Activated CD4-positive, alpha-beta T cell treated with anti-CD3 and anti-CD28 coated beads, Interleukin-2, amount 10 ng/mL, durations not matched to agents 7 days and 5 days (primary cell): ENCODE measurements at regions of chr13 and their contacts with region 1.

Region 1: DNA sequence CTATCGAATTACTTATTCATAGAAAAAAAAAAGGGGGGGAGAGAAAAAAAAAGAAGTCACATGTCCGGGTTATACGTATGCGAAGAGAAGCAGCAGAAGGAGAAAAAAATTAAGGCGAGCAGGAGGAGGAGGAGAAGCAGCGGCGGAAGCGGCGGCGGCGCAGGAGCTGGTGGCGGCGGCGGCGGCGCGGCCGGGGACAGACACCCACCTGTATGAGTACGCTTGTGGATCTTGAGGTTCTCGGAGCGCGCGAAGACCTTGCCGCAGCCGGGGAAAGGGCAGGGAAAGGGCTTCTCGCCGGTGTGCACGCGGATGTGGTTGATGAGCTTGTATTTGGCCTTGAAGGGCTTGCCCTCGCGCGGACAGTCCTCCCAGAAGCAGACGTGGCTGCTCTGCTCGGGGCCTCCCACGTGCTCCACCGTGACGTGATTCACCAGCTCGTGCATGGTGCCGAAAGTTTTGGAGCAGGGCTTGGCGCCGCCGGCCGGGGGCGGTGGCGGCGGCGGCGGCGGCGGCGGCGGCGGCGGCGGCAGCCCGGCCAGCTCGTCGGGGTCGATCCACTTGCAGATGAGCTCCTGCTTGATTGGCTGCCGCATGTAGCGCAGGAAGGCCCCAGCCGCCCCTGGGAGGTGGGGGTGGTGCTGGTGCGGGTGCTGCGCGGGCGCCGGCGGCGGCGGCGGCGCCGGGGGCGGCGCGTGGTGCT is 1.5 kb downstream of the ZIC5 start:
- DNase-seq: peak; percentile 30
- H3K4me3 Mint-ChIP-seq: peak overlapping the region; percentile 61
- H3K27ac Mint-ChIP-seq: peak overlapping the region; percentile 86
- H3K4me1 Mint-ChIP-seq: peaks cover 14% of the 10 kb centered on the region
- H3K27me3 Mint-ChIP-seq: peaks cover 74% of the 10 kb centered on the region

Region 2: GRCh38 chr13:99590519-99591011 is 379.5 kb before region 1 on chr13:
- CTCF ChIA-PET with region 1: no interaction called
- POLR2A ChIA-PET with region 1: no interaction called
- DNase-seq: no peak
- H3K4me3 Mint-ChIP-seq: no peak overlapping the region
- H3K27ac Mint-ChIP-seq: no peak overlapping the region
- H3K4me1 Mint-ChIP-seq: peaks cover 3% of the 10 kb centered on the region
- H3K27me3 Mint-ChIP-seq: peaks cover 5% of the 10 kb centered on the region

Region 3: DNA sequence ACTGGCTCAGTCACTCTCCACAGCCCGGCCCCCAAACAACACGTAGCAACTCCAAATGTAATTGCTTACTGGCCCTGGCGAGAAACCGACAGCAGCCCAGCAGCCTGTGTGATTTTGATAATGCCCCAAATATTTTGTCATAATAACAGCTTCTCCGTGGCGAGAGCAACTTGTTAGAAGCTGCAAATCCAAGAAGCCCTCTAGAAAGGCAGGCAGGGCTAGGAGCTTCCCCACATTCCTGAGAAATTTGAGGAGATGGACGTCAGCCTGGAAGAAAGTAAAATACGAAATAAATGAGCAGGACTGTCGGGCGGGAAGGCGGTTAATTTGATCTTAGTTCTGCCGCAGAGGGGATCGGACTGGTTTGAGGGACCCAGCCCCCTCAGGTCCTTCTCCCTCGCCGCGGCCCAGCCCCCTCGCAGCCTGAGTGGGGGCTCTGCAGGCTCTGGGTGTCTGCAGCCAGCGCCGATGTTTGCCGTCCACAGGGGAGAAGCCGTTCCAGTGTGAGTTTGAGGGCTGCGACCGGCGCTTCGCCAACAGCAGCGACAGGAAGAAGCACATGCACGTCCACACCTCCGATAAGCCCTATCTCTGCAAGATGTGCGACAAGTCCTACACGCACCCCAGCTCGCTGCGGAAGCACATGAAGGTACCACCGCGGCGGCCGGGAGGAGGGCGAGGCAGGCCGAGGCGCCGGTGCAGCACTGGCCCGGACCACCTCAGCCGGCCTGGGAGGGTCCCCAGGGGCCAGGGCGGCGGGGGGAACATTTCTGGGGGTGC is 14.6 kb after region 1 on chr13:
- CTCF ChIA-PET with region 1: interaction called, 11 read pairs
- POLR2A ChIA-PET with region 1: no interaction called
- DNase-seq: no peak
- H3K4me3 Mint-ChIP-seq: peak overlapping the region; percentile 30
- H3K27ac Mint-ChIP-seq: peak overlapping the region; percentile 77
- H3K4me1 Mint-ChIP-seq: peaks cover 22% of the 10 kb centered on the region
- H3K27me3 Mint-ChIP-seq: peaks cover 64% of the 10 kb centered on the region